ENCODE measurements at regions of chr4 and their contacts with region 1.

Region 1: GRCh38 chr4:71217688-71218087 is 121.1 kb upstream of the SLC4A4 start:
- DNase-seq: no peak
- H3K4me3 ChIP-seq: no peak overlapping the region
- H3K27ac ChIP-seq: no peak overlapping the region
- H3K4me1 ChIP-seq: no peaks in the 10 kb centered on the region
- H3K27me3 ChIP-seq: peaks cover 16% of the 10 kb centered on the region
- CTCF ChIP-seq: no peak
- EP300 ChIP-seq: no peak
- RAD21 ChIP-seq: no peak

Region 2: GRCh38 chr4:71229477-71230270 is 12.0 kb after region 1 on chr4:
- CTCF ChIA-PET with region 1: interaction called, 11 read pairs
- POLR2A ChIA-PET with region 1: no interaction called
- DNase-seq: peak; percentile 36
- H3K4me3 ChIP-seq: no peak overlapping the region; a peak in 2 of 4 replicates
- H3K27ac ChIP-seq: no peak overlapping the region
- H3K4me1 ChIP-seq: no peaks in the 10 kb centered on the region
- H3K27me3 ChIP-seq: peaks cover 34% of the 10 kb centered on the region; the same call in 1 of the 2 replicates
- CTCF ChIP-seq: peak; percentile 73
- EP300 ChIP-seq: no peak
- RAD21 ChIP-seq: peak; percentile 54